Lower lobe of right lung (tissue), 2 donors: ENCODE measurements at regions of chr5 and their contacts with region 1.

Region 1: GRCh38 chr5:141992349-141992963 is 20.4 kb downstream of the GNPDA1 start:
- DNase-seq: no peak
- ATAC-seq: peak; percentile 71 to 85
- H3K4me3 ChIP-seq: no peak overlapping the region
- H3K27ac ChIP-seq: no peak overlapping the region
- H3K4me1 ChIP-seq: no peaks in the 10 kb centered on the region
- H3K27me3 ChIP-seq: no peaks in the 10 kb centered on the region
- CTCF ChIP-seq: peak; percentile 87

Region 2: GRCh38 chr5:142133330-142134206 is 141.1 kb after region 1 on chr5:
- intact Hi-C with region 1: loop called (anchors 10 kb)
- DNase-seq: no peak
- ATAC-seq: no peak
- H3K4me3 ChIP-seq: no peak overlapping the region
- H3K27ac ChIP-seq: no peak overlapping the region
- H3K4me1 ChIP-seq: peaks cover 29% of the 10 kb centered on the region
- H3K27me3 ChIP-seq: no peaks in the 10 kb centered on the region
- CTCF ChIP-seq: no peak